ENCODE measurements at regions of chr12 and their contacts with region 1.

Region 1: DNA sequence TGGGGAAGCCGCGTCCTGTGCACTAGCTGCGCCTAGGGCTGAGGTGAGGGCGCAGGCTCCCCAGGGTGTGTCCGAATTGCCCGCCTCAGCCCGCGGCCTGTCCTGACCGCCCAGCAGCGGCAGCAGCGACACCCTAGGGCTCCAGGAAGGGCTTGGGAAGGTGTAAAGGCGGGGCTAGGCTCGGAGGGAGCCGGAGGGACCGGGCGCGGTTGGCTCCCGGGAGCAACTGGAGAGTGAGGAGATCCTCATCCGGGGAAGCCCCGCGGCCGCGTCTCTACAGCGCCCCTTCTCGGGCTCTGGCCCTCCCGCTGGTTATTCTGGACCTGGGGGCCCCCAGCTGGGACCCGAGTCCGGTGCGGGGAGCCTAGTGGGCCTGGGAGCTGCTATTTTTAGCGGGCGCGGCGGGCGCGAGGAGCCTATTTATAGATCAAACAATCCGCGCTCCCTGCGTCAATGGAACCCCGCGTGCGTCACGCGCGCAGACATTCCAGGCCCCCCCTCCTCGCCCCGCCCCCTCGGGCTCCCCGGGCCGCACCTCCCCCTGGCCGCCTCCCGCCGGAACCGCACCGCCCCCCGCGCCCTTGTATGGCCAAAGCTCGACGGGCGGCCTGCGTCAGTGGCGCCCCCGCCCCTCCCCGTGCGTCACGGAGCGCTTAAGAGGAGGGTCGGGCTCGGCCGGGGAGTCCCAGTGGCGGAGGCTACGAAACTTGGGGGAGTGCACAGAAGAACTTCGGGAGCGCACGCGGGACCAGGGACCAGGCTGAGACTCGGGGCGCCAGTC is at the start of gene NR4A1:
- DNase-seq: peak; percentile 95 to 98 (median 97)
- H3K4me3 ChIP-seq: peak within 1 kb of the TSS; percentile 41 to 79 (median 70)
- H3K27ac ChIP-seq: peak within 1 kb of the TSS in 1 of 2 experiments; percentile 65
- H3K4me1 ChIP-seq: peaks cover 0 to 30% (median 21%) of the 10 kb centered on the region in 4 experiments
- H3K27me3 ChIP-seq: peaks cover 0 to 31% (median 22%) of the 10 kb centered on the region in 5 experiments

Region 2: GRCh38 chr12:51961834-51962233 is 89.1 kb before region 1 on chr12:
- CTCF ChIA-PET with region 1: no interaction called
- POLR2A ChIA-PET with region 1: no interaction called
- DNase-seq: no peak
- H3K4me3 ChIP-seq: no peak overlapping the region
- H3K27ac ChIP-seq: no peak overlapping the region
- H3K4me1 ChIP-seq: peaks cover 14 to 28% (median 17%) of the 10 kb centered on the region in 4 experiments
- H3K27me3 ChIP-seq: no peaks in the 10 kb centered on the region

Region 3: DNA sequence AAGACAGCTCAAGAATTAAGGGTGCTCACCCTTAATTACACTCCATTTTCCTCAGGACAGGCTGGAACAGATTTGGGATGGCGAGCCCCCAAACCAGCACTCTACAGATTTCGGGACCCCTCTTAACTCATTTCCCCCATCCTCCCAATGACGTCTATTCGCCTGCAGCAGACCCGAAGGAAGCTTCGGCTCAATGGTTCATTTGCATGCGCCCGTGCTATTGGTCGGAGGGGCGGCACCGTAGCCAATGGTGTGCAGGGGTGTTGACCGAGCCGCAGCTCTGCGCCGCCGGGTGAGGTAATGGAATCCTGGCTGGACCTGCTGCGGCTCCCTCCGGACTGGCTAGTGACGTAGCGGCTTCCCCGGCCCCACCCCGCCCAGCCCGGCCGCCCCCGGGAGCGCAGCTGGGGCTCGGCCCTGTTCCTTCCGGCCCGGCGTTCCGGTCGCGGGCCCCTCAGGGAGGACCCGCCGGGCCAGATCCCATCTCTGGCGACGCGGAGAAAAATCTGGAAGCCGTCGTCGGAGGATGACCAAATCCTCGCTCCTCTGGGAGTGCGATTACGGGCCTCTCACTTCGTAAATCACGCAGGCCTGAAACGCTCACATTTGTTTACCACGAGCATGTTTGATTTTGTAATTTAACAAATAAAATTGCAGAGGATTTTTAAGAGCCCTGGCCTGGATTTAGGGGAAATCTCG is 18.0 kb before region 1 on chr12:
- CTCF ChIA-PET with region 1: interaction called, 312 read pairs
- POLR2A ChIA-PET with region 1: interaction called, 30 read pairs
- DNase-seq: peak; percentile 90 to 95 (median 93)
- H3K4me3 ChIP-seq: peak overlapping the region in 6 of 7 experiments; percentile 44 to 71 (median 56)
- H3K27ac ChIP-seq: peak overlapping the region in 1 of 2 experiments; percentile 43
- H3K4me1 ChIP-seq: peaks cover 0 to 36% (median 29%) of the 10 kb centered on the region in 4 experiments
- H3K27me3 ChIP-seq: peaks cover 0 to 33% (median 9%) of the 10 kb centered on the region in 5 experiments

Region 4: GRCh38 chr12:52061850-52062592 is 11.1 kb after region 1 on chr12:
- CTCF ChIA-PET with region 1: interaction called, 12 read pairs
- POLR2A ChIA-PET with region 1: interaction called, 6 read pairs
- DNase-seq: no peak
- H3K4me3 ChIP-seq: no peak overlapping the region
- H3K27ac ChIP-seq: no peak overlapping the region
- H3K4me1 ChIP-seq: peaks cover 0 to 5% (median 0%) of the 10 kb centered on the region in 4 experiments
- H3K27me3 ChIP-seq: no peaks in the 10 kb centered on the region

Region 5: GRCh38 chr12:52069327-52070184 is 18.6 kb after region 1 on chr12 and contains the start of gene ATG101:
- CTCF ChIA-PET with region 1: interaction called, 8 read pairs
- POLR2A ChIA-PET with region 1: interaction called, 20 read pairs
- DNase-seq: peak; percentile 96 to 98 (median 97)
- H3K4me3 ChIP-seq: peak within 1 kb of the TSS; percentile 69 to 99 (median 93)
- H3K27ac ChIP-seq: peak within 1 kb of the TSS; percentile 95 to 98
- H3K4me1 ChIP-seq: peaks cover 4 to 19% (median 18%) of the 10 kb centered on the region in 4 experiments
- H3K27me3 ChIP-seq: no peaks in the 10 kb centered on the region

Region 6: GRCh38 chr12:52089491-52089890 is 38.5 kb after region 1 on chr12:
- CTCF ChIA-PET with region 1: no interaction called
- POLR2A ChIA-PET with region 1: no interaction called
- DNase-seq: no peak
- H3K4me3 ChIP-seq: no peak overlapping the region
- H3K27ac ChIP-seq: no peak overlapping the region
- H3K4me1 ChIP-seq: no peaks in the 10 kb centered on the region
- H3K27me3 ChIP-seq: peaks cover 2 to 70% (median 22%) of the 10 kb centered on the region in 5 experiments